Activated naive CD4-positive, alpha-beta T cell treated with anti-CD3 and anti-CD28 coated beads for 36 hours (primary cell): ENCODE measurements at regions of chr10 and their contacts with region 1.

Region 1: DNA sequence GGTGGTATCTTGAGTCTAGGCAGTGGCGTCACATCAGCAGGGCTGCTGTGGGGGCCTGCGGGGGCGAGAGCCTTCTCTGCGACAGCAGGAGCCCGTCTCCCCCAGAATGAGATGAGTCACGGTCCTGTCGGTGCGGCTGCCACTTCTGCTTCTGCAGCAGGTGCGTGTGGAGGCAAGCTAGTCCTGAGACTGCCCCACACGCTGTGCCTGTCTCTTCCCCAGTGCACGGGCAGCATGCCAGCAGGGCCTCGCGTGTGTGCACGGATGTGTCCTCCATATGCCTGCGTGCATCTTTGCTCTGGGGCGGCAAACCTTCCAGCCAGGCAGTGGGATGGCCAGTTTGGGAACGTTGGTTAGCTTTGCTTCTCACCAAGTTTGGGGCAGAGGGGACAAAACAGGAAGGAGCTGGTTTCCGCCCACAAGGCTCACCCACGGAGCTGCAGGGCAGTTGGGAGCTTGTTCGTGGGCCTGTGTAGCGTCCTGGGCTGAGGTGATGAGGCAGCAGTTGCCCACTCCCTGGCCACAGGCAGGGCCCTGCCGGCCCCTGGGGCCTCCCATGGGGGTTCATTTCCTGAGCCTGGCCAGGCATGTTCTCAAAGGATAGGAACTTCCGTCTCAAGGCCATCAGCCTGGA is 60.8 kb upstream of the PPIF start:
- DNase-seq: peak; percentile 90
- H3K4me3 Mint-ChIP-seq: peak overlapping the region; percentile 27
- H3K27ac Mint-ChIP-seq: peak overlapping the region; percentile 65
- H3K4me1 Mint-ChIP-seq: peaks cover 35% of the 10 kb centered on the region
- H3K27me3 Mint-ChIP-seq: no peaks in the 10 kb centered on the region

Region 2: DNA sequence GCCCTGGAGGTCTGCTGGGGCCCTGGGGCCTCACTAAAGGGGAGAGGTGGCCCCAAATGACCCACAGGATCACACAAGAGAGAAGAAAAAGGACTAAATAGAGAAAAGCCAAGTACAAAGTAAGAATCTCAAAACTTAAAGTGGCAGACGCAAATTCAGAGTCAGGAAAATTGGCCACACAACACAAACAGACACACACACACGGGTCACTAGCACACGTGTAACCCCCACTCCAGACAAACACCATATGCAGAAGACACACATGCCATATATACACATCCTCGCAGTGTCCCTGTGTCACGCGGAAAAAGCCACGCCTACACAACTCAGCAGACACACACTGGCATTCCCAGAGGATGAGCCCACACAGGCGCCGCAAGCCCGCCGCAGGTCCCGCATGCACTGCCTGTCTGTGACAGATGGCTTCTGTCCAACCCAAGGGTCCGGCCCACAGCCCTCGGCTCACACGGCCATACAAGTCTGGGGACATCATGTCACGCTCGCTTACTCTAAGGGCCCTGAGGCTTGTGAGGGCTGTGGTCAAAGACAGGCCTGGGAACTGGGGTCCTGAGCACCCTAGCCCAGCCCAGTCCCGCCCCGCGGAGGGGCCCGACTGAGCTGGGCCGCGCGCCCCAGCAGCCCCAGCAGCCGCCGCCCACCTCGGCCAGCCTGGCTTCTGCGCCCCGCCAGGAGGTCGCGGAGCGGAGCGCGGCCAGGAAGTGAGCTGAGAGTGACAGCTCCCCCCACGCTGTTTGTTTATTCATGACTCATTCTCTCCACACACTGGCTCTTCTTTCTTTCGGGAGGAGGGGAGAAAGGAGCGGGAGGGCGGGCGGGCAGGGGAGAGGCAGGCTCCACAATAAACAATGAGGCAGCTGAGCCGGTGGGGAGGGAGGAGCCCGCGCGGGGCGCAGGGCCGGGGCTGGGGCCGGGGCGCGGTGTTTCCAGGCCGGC is 313.2 kb before region 1 on chr10:
- CTCF ChIA-PET with region 1: no interaction called
- intact Hi-C with region 1: no loop called
- DNase-seq: peak; percentile 80
- H3K4me3 Mint-ChIP-seq: peak overlapping the region; percentile 37
- H3K27ac Mint-ChIP-seq: peak overlapping the region; percentile 8
- H3K4me1 Mint-ChIP-seq: peaks cover 9% of the 10 kb centered on the region
- H3K27me3 Mint-ChIP-seq: no peaks in the 10 kb centered on the region

Region 3: DNA sequence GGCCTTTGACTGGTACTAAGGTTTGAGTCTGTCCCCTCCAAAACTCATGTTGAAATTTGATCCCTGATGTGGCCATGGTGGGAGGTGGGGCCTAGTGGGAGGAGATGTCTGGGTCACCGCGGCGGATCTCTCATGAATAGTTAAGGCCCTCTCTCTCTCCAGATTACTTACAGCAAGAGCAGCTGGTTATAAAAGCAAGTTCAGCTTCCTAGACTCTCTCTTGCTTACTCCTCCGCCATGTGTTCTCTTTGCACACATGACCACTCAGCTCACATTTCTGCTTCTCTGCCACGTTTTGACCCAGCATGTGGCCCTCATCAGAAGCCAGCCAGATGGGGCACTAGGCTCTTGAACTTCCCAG is 247.6 kb before region 1 on chr10:
- CTCF ChIA-PET with region 1: no interaction called
- intact Hi-C with region 1: no loop called
- DNase-seq: no peak
- H3K4me3 Mint-ChIP-seq: no peak overlapping the region
- H3K27ac Mint-ChIP-seq: no peak overlapping the region
- H3K4me1 Mint-ChIP-seq: peaks cover 15% of the 10 kb centered on the region
- H3K27me3 Mint-ChIP-seq: no peaks in the 10 kb centered on the region

Region 4: GRCh38 chr10:79242620-79243152 is 43.7 kb before region 1 on chr10:
- CTCF ChIA-PET with region 1: no interaction called
- intact Hi-C with region 1: loop called (anchors 1 kb)
- DNase-seq: peak; percentile 69
- H3K4me3 Mint-ChIP-seq: peak overlapping the region; percentile 78
- H3K27ac Mint-ChIP-seq: peak overlapping the region; percentile 56
- H3K4me1 Mint-ChIP-seq: peaks cover 45% of the 10 kb centered on the region
- H3K27me3 Mint-ChIP-seq: no peaks in the 10 kb centered on the region

Region 5: GRCh38 chr10:79249186-79250121 is 37.0 kb before region 1 on chr10:
- CTCF ChIA-PET with region 1: no interaction called
- intact Hi-C with region 1: loop called (anchors 1 kb)
- DNase-seq: peak; percentile 61
- H3K4me3 Mint-ChIP-seq: peak overlapping the region; percentile 37
- H3K27ac Mint-ChIP-seq: peak overlapping the region; percentile 73
- H3K4me1 Mint-ChIP-seq: peaks cover 50% of the 10 kb centered on the region
- H3K27me3 Mint-ChIP-seq: no peaks in the 10 kb centered on the region

Region 6: GRCh38 chr10:79316671-79317431 is 30.4 kb after region 1 on chr10:
- CTCF ChIA-PET with region 1: interaction called, 6 read pairs
- intact Hi-C with region 1: loop called (anchors 1 kb)
- DNase-seq: peak; percentile 47
- H3K4me3 Mint-ChIP-seq: no peak overlapping the region
- H3K27ac Mint-ChIP-seq: peak overlapping the region; percentile 56
- H3K4me1 Mint-ChIP-seq: peaks cover 60% of the 10 kb centered on the region
- H3K27me3 Mint-ChIP-seq: peaks cover 2% of the 10 kb centered on the region

Region 7: DNA sequence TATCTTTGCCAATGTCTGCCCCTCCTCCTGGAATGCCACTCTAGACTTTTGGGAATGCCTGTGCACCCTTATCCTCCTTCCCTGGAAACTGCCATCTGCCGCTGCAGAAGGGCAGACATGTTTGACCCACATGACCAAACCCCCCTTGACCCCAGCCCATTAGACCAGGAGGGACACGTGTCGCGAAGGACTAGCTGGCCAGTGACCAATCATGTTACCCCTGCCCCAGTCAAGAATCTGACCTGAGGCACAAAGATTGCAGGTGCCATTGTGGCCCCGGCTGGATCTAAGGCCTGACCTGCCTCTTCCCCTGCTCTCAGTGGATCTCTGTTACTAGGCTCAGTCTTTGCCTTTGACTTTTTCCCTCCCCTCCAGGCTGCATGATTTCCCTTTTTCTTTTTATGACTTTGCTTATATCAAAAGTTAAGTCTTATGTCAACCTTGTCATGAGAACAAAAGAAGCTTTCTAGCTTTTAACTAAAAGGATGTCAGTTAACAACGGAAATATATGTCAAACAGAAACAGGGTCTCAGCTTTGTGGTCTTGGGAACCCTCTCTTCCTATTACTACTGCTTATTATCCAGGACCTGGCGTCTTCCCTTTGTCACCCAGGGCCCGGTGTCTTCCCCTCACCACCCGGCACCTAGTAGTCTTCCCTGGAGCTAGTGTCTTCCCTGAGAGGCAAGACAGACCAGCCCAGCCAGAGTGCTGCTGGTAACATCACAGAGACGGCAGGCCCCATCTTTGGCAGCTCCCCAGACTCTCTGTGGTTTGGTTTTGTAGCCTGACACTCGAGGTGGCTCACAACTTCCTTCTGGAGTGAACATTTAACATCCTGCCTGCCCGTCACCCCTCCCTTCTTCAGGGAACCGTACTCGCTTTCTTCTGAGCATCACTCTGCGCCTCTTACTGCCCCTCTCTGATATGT is 36.4 kb after region 1 on chr10:
- CTCF ChIA-PET with region 1: interaction called, 6 read pairs
- intact Hi-C with region 1: loop called (anchors 1 kb)
- DNase-seq: peak; percentile 95
- H3K4me3 Mint-ChIP-seq: peak overlapping the region; percentile 33
- H3K27ac Mint-ChIP-seq: peak overlapping the region; percentile 92
- H3K4me1 Mint-ChIP-seq: peaks cover 68% of the 10 kb centered on the region
- H3K27me3 Mint-ChIP-seq: no peaks in the 10 kb centered on the region

Region 8: DNA sequence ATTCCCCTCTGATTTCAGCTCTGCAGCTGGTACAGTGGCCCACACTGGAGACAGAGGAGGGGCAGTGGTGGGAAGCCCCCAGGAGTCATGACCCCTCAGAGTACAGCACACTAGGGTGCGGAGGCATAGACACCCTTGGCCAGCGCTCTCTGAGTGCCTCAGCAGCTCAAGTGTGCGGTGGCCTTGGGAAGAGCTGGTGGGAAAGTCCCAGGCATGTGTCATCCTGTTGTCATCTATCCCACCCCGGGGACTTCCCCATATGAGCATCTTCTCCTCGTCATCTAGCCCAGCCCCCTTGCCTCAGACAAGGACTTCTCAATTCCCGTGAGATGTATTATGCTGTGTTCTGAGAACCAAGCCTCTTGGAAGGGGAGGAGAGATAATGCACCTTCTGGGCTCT is 45.3 kb after region 1 on chr10:
- CTCF ChIA-PET with region 1: no interaction called
- intact Hi-C with region 1: loop called (anchors 1 kb)
- DNase-seq: peak; percentile 95
- H3K4me3 Mint-ChIP-seq: peak overlapping the region; percentile 28
- H3K27ac Mint-ChIP-seq: peak overlapping the region; percentile 93
- H3K4me1 Mint-ChIP-seq: peaks cover 43% of the 10 kb centered on the region
- H3K27me3 Mint-ChIP-seq: no peaks in the 10 kb centered on the region

Region 9: DNA sequence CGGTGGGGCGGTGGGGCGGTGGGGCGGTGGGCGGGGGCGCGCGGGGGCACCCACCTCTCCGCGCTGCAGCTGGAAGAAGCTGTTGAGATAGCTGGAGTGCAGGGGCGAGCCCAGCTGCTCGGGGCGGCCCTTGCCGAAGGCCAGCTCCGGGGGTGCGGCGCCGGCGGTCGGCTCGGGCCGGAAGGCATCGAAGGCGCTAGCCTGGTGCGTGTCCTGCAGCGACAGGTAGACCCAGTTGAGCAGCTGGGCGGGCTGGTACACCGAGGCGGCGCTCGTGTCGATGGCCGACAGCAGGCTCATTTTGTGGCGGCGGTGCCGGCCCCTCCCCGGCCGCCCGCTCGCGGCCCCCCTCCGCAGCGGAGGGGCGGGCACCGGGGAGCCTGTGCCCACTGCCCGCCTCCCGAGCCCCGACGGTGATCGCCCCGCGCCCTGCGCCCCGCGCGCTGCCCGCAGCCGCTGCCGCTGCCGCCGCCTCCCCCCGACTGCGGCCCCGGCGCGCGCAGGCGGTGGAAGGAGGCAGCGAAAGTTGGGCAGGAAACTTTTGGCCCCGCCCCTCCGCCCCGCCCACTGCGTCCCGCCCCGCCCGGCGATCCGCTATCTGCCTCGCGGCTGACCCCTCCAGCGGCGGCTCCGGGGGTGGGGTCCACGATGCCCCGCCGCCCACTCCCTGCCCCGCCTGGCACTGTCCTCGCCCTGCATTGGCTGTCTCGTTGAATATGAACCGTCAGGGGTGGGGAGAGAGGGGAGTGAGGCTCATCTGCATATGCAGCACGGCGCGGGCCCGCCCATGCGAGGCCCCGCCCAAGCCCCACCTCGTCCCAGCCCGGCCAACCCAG is 158.9 kb after region 1 on chr10 and contains the start of gene ZCCHC24:
- CTCF ChIA-PET with region 1: no interaction called
- intact Hi-C with region 1: loop called (anchors 1 kb)
- DNase-seq: peak; percentile 92
- H3K4me3 Mint-ChIP-seq: peak within 1 kb of the TSS; percentile 70
- H3K27ac Mint-ChIP-seq: no peak within 1 kb of the TSS
- H3K4me1 Mint-ChIP-seq: peaks cover 21% of the 10 kb centered on the region
- H3K27me3 Mint-ChIP-seq: peaks cover 12% of the 10 kb centered on the region
- total RNA-seq, gene ZCCHC24: 0.52 to 0.69 TPM